Right ventricle myocardium inferior (tissue), 1 donor: ENCODE measurements at regions of chr15 and their contacts with region 1.

Region 1: DNA sequence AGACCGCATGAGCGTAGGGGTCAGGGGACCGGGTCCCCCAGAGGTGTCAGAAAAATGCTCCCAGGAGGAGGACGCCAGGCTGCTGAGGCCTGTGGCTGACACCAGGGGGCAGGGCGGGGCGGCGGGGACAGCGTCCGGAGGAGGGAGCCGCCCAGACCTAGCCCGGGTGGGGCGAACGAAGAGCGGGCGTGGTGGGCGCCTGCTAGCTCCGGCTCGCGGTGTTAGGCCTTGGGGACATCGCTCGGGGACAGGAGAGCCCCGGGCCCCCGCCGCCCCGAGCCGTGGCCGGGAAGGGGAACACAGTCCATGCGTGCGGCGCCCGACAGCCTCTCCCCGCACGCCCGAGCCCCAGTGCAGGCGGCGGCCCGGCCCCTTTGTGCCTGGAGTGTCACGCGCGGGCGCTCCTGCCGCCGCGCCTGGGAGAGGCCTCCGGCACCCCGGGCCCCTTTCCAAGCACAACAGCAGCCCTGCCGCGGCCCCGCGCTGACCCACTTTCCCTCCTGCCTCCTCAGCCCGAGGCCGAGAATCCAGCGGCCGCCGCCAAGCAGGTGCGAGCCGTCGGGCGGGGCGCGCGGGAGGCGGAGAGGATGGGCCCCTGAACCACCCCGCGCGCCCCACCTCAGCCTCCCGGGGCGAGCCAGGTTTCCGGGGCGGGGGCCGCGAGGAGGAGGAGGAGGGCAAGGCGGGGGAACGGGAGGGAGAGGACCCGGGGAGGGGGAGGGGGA is 111.0 kb upstream of the KLF13 start:
- DNase-seq: peak; percentile 94
- ATAC-seq: peak; percentile 87

Region 2: GRCh38 chr15:31236184-31237042 is 20.8 kb after region 1 on chr15:
- intact Hi-C with region 1: loop called (anchors 2 kb)
- DNase-seq: peak; percentile 80
- ATAC-seq: peak; percentile 92

Region 3: GRCh38 chr15:31263751-31264558 is 48.3 kb after region 1 on chr15:
- intact Hi-C with region 1: loop called (anchors 5 kb)
- DNase-seq: peak; percentile 94
- ATAC-seq: peak; percentile 57

Region 4: GRCh38 chr15:31396881-31397560 is 181.4 kb after region 1 on chr15:
- intact Hi-C with region 1: loop called (anchors 5 kb)
- DNase-seq: peak; percentile 97
- ATAC-seq: peak; percentile 92

Region 5: GRCh38 chr15:31435261-31435911 is 219.7 kb after region 1 on chr15:
- intact Hi-C with region 1: loop called (anchors 2 kb)
- DNase-seq: peak; percentile 87
- ATAC-seq: peak; percentile 86